H1 (cell line): ENCODE measurements at regions of chr13 and their contacts with region 1.

Region 1: GRCh38 chr13:99176309-99177276 is 24.1 kb upstream of the UBAC2 start:
- DNase-seq: peak; percentile 64 to 94
- H3K4me3 ChIP-seq: no peak overlapping the region
- H3K27ac ChIP-seq: no peak overlapping the region
- H3K4me1 ChIP-seq: no peaks in the 10 kb centered on the region
- H3K27me3 ChIP-seq: no peaks in the 10 kb centered on the region
- CTCF ChIP-seq: peak; percentile 96 to 97 (median 97)
- EP300 ChIP-seq: no peak
- POLR2A ChIP-seq: no peak
- RAD21 ChIP-seq: peak; percentile 98

Region 2: DNA sequence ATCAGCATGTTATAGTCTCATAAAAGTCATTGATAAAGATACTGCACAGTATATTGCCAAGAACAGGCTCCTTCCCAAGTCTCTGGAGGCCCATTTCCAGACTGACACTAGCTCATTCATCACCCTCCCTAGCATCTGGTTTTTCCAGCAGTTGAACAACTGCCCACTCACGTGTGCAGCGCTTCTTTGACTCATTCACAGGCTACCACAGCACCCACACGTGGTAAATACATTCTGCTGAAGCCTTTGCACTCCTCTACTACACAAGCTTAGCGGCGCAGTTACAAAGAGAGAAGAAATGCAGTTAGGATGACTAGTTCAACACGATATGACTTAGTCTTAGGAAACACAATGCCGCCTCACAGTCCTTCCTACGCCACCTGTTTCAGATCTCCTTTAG is 286.4 kb before region 1 on chr13:
- CTCF ChIA-PET with region 1: no interaction called
- POLR2A ChIA-PET with region 1: no interaction called
- DNase-seq: no peak
- H3K4me3 ChIP-seq: no peak overlapping the region
- H3K27ac ChIP-seq: no peak overlapping the region
- H3K4me1 ChIP-seq: peaks cover 2 to 14% (median 9%) of the 10 kb centered on the region in 4 experiments; a peak in 6 of 7 replicates
- H3K27me3 ChIP-seq: no peaks in the 10 kb centered on the region
- CTCF ChIP-seq: no peak
- EP300 ChIP-seq: no peak
- POLR2A ChIP-seq: no peak
- RAD21 ChIP-seq: no peak

Region 3: DNA sequence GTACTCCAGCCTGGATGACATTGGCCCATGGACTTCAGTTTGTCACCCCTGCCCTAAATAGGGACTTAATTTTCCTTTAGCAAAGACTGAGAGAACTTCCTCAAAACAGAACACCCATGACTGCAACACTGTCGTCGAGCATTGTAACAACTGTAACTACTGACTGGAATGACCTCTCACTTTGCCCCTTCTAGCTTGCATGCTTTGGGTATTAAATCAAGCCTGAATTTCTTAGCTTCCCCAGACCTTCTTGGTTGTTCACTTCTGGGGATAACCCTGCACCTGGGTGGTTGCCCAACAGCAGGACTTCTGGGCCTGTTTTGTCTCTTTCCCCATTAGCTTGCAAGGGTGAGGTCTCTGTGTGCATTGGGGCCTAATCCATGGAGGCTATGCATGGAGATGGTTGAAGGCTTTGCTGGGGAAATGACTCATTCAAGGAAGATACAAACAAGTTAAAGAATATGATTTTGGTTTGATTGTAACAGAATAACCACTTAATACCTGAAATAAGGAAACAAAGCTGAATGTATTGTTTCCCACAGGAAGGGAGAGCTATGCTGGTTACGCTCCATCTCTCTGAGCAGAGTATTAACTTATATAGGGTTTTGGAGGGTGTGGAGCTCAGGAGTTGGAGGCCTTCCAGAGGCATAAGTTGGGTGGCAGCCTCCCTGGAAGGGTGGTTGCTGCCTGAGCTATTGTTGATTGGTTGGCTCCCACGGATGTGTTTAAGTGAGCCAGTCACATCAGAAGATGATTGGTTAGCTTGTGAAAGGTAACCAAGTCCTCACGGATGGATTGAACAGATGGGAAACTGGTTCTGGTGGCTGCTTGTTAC is 10.6 kb before region 1 on chr13:
- CTCF ChIA-PET with region 1: interaction called, 12 read pairs
- POLR2A ChIA-PET with region 1: no interaction called
- DNase-seq: no peak
- H3K4me3 ChIP-seq: no peak overlapping the region
- H3K27ac ChIP-seq: no peak overlapping the region
- H3K4me1 ChIP-seq: no peaks in the 10 kb centered on the region
- H3K27me3 ChIP-seq: no peaks in the 10 kb centered on the region
- CTCF ChIP-seq: no peak
- EP300 ChIP-seq: no peak
- POLR2A ChIP-seq: no peak
- RAD21 ChIP-seq: no peak

Region 4: DNA sequence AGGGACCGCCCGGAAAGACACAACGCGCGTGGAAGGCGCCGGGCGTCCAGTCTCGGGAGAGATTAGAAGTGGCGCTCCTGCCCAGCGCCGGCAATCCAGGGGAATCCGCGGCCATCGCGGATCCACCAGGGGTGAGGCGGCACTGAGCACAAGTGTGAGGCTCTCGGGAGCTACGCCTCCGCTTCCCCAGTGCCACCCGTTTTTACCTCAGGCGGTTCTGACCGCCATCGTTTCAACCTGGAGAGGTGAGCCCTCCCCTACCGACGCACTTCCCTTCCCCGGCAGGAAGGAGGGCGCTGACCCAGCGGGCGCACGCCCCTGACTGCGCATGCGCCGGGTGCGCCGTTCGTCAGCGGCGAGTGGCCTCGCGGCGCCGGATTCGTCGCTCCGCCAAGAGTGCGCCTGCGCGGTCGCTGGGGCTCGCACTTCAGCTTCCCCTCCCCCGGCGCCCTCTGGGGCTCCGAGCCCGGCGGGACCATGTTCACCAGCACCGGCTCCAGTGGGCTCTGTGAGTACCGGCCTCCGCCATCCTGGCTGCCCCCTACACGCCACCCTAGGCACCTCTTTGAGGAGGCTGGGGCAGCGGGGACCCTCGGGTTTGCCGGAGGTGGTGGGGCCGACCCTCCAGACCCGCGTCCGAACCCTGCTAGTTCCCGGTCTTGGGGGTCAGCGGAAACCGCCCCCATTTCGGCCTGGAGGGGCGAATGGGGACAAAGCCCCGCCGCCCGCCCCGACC is 24.0 kb after region 1 on chr13 and contains the start of gene UBAC2:
- CTCF ChIA-PET with region 1: interaction called, 16 read pairs
- POLR2A ChIA-PET with region 1: interaction called, 5 read pairs
- DNase-seq: peak; percentile 90 to 96
- H3K4me3 ChIP-seq: peak within 1 kb of the TSS; percentile 81 to 94 (median 88)
- H3K27ac ChIP-seq: peak within 1 kb of the TSS; percentile 94
- H3K4me1 ChIP-seq: peaks cover 0 to 7% (median under 1%) of the 10 kb centered on the region in 4 experiments; a peak in 3 of 7 replicates
- H3K27me3 ChIP-seq: no peaks in the 10 kb centered on the region
- CTCF ChIP-seq: no peak
- EP300 ChIP-seq: no peak
- POLR2A ChIP-seq: peak; percentile 99
- RAD21 ChIP-seq: no peak
- total RNA-seq, gene UBAC2: 73.6 and 75.9 TPM in 2 replicates

Region 5: DNA sequence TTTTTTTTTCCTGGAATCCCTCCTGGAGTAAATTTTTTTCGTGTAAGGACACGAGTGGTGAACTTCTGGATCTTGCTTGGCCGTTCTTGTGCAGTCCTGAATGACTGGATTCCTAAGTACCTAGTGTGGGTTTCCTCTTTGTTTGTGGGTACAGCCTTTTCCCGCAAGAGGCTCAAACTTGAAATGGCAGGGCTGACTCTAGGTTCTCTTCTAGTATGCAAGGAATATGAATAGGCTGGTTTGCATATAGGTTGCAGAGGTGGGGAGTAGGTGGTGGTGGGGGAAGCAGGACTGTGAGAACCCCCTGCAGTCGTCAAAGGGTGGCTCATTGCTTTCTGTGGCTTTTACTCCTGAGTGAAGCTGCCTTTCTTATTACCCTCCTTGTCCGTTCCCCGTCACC is 37.6 kb after region 1 on chr13:
- CTCF ChIA-PET with region 1: interaction called, 14 read pairs
- POLR2A ChIA-PET with region 1: no interaction called
- DNase-seq: no peak
- H3K4me3 ChIP-seq: peak overlapping the region in 1 of 4 experiments; percentile 2; a peak in 1 of 8 replicates
- H3K27ac ChIP-seq: no peak overlapping the region
- H3K4me1 ChIP-seq: peaks cover 4 to 15% (median 11%) of the 10 kb centered on the region in 4 experiments; a peak in 6 of 7 replicates
- H3K27me3 ChIP-seq: no peaks in the 10 kb centered on the region
- CTCF ChIP-seq: no peak
- EP300 ChIP-seq: no peak
- POLR2A ChIP-seq: no peak
- RAD21 ChIP-seq: no peak

Region 6: GRCh38 chr13:99258210-99258860 is 81.7 kb after region 1 on chr13 and contains the start of gene GPR18:
- CTCF ChIA-PET with region 1: interaction called, 242 read pairs
- POLR2A ChIA-PET with region 1: interaction called, 3 read pairs
- DNase-seq: no peak
- H3K4me3 ChIP-seq: no peak within 1 kb of the TSS
- H3K27ac ChIP-seq: no peak within 1 kb of the TSS
- H3K4me1 ChIP-seq: no peaks in the 10 kb centered on the region
- H3K27me3 ChIP-seq: no peaks in the 10 kb centered on the region
- CTCF ChIP-seq: no peak
- EP300 ChIP-seq: no peak
- POLR2A ChIP-seq: no peak
- RAD21 ChIP-seq: no peak
- total RNA-seq, gene GPR18: not detected in 2 replicates

Region 7: DNA sequence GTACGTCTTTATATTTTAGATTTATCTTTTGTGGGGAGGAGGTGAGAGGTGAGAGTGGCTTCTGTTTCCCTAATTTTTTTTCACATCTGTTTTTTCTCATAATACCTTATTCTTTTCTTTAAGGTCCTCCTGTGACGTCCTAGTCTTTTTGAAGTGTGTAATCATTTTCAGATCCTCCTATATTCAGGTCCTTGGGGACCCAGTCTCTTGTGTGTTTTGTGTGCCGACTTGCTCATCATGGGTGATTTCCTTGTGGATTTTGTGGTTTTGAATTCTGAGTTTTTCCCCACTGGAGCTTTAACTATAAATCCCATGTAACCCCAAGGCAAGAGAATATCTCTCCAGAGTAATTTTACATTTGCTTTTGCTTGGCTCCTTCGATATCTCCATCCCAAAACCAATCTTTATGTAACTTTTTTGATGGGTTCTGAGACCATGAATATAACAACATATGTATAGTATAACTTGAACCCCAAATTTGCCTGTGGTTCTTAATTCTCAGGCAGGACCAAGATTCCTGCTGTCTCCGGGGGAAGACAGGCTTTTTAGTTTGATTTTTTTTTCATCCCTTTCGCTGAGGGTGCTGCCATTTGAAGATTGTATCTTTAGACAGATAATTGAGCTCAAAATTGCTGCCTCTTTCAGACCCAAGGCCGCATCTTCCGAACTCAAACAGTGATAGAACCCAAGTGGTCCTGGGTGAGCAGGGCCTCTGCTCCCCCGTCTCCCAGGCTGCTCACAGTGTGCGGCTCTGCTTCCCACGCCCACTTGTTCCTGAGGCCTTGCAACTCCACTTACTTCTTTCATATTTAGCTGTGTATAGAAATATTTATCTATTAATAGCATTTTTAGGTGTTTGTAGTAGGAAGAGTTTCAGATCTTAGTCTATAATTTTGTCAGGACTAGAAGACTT is 189.7 kb after region 1 on chr13:
- CTCF ChIA-PET with region 1: interaction called, 11 read pairs
- POLR2A ChIA-PET with region 1: no interaction called
- DNase-seq: peak in 1 of 2 experiments; percentile 23
- H3K4me3 ChIP-seq: no peak overlapping the region
- H3K27ac ChIP-seq: no peak overlapping the region
- H3K4me1 ChIP-seq: peaks cover 0 to 4% (median 2%) of the 10 kb centered on the region in 4 experiments; a peak in 2 of 7 replicates
- H3K27me3 ChIP-seq: no peaks in the 10 kb centered on the region
- CTCF ChIP-seq: no peak
- EP300 ChIP-seq: no peak
- POLR2A ChIP-seq: no peak
- RAD21 ChIP-seq: no peak

Region 8: DNA sequence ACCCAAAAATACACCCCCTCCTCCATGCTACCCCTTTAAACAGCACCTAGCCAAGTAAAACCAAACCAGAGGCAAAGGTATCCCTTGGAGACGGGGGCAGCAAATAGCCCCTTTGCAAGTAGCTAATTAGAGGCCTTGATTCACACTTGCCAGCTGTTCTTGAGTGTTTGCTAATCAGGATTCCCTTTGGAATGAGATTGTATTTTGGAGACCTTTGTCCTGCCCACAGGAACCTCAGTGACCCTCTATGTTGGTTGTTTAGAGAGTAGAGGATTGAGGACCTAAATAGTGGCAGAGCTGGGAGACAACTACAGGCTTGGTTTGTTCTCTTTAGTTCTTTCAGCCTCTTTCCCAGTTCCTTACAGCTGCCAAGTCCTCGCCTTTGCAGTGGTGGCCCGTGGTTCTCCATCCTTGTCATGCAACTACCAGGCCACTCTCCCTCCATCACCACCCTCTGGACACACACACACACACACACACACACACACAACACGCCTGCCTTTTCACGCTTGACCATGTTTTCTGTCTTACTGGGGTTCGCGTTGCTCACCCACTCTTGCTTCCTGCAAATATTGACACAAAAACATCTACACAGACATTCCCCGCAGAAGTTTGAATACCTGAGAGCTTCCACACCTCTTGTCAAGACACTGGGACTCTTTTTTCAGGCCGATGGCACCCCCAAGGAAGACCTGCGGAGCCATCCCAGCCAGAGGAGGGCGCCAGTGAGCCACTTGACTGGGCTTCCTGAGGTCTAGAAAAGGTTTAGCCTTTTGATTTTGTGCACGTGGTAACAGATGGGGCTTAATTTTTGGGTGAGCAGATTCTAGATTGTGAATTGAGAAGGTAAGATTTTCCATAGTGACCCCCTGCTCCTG is 210.6 kb after region 1 on chr13:
- CTCF ChIA-PET with region 1: interaction called, 16 read pairs
- POLR2A ChIA-PET with region 1: no interaction called
- DNase-seq: peak; percentile 31 to 95
- H3K4me3 ChIP-seq: no peak overlapping the region
- H3K27ac ChIP-seq: no peak overlapping the region
- H3K4me1 ChIP-seq: peaks cover 0 to 14% (median 3%) of the 10 kb centered on the region in 4 experiments; a peak in 3 of 7 replicates
- H3K27me3 ChIP-seq: no peaks in the 10 kb centered on the region
- CTCF ChIP-seq: peak; percentile 88 to 98 (median 88)
- EP300 ChIP-seq: no peak
- POLR2A ChIP-seq: no peak
- RAD21 ChIP-seq: peak; percentile 85 to 90